ENCODE measurements at regions of chr13 and their contacts with region 1.

Region 1: DNA sequence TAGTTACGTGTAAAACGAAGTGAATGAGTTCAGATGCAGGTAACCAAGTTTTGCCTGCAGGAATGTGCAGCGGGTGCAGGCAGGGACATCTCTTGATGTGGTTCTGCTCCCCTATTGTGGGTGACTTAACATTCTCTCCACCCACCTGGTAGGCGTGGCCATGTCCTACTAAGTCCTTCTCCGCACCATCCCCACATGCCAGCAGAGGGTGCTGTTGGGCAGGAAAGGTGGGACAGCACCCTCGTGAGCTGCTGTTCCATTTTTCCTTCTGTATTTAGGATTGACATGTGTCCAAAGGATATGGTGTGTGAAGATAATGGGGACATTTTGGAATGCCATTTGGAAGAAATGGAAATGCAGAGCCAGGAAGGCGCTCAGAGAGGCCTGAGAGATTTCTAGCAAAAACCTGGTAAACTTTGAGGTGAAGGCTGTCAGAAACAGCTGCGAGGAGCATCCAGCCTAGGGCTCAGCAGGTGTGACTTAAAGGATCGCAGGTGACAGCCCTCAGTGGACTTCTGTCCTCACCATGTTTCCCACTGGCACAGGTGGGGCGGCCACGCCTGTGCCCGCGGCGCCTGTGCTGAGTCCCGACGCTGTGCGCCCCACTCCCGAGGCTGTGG is 26.2 kb upstream of the MCF2L start:
- DNase-seq: peak; percentile 53
- H3K4me3 ChIP-seq: peak overlapping the region; percentile 45 to 70 (median 58)
- H3K27ac ChIP-seq: peak overlapping the region in 1 of 4 donors; percentile 66
- H3K4me1 ChIP-seq: peaks cover 9 to 19% (median 15%) of the 10 kb centered on the region in 3 donors
- H3K27me3 ChIP-seq: peaks cover 0 to 22% (median 0%) of the 10 kb centered on the region in 4 donors
- CTCF ChIP-seq: peak; percentile 88 to 98 (median 95)
- POLR2A ChIP-seq: no peak

Region 2: GRCh38 chr13:113029487-113030258 is 86.9 kb after region 1 on chr13:
- intact Hi-C with region 1: loop called (anchors 5 kb)
- DNase-seq: no peak
- H3K4me3 ChIP-seq: no peak overlapping the region
- H3K27ac ChIP-seq: no peak overlapping the region
- H3K4me1 ChIP-seq: peaks cover 0 to 6% (median 0%) of the 10 kb centered on the region in 3 donors
- H3K27me3 ChIP-seq: peaks cover 0 to 7% (median 0%) of the 10 kb centered on the region in 4 donors
- CTCF ChIP-seq: peak; percentile 50 to 85 (median 76)
- POLR2A ChIP-seq: no peak

Region 3: GRCh38 chr13:113153810-113154748 is 211.3 kb after region 1 on chr13:
- intact Hi-C with region 1: loop called (anchors 5 kb)
- DNase-seq: peak; percentile 35
- H3K4me3 ChIP-seq: peak overlapping the region; percentile 29 to 68 (median 50)
- H3K27ac ChIP-seq: peak overlapping the region; percentile 49 to 80 (median 73)
- H3K4me1 ChIP-seq: peaks cover 12 to 26% (median 15%) of the 10 kb centered on the region in 3 donors
- H3K27me3 ChIP-seq: peaks cover 0 to 23% (median 0%) of the 10 kb centered on the region in 4 donors
- CTCF ChIP-seq: no peak
- POLR2A ChIP-seq: peak in 1 of 4 donors; percentile 17